ENCODE measurements at regions of chr7 and their contacts with region 1.

Region 1: DNA sequence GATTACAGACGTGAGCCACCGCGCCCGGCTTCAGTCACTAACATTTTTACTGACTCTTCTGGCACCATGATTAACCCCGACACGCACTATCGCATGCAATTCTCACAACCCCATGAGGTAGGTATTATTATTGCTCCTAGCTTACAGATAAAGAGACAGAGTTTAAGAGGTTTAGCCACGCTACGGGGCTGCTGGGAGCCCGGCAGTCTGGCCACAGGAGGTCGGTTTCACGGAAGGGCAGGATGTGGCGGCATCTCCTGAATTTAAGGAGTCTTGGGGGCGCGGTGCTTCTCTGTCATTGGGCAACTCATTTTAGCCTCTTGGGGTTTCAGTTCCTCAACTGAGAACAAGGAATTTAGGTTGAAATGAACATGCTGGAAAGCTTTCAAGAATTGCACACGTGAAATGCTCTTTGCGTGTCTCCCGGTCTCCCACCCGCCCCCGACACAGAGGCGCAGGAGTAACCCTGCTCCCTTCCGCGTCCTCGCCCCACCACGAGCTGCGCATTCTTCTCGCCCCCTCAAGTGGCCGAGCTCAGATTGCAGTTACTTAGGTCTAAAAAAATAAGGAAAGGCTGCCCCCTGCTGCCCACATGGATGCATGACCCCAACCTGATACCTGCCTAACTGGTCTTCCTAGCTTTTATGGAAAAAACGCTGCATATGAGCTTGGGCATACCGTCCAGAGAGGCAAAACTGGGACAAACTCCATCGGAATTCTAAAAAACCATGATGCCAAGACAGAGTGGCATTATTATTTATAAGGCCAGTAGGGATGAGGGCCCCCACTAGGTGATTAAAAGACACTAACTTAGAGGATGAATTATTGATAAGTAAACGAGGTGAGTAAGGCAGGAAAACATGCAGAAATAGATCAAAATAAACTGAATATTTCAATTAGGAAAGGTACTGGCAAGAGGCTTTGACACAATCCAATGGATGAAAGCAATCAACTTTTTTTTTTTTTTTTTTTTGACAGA is 12.4 kb downstream of the PRSS2 start:
- DNase-seq: peak; percentile 88
- H3K4me3 Mint-ChIP-seq: peak overlapping the region; percentile 64
- H3K27ac Mint-ChIP-seq: no peak overlapping the region
- H3K4me1 Mint-ChIP-seq: no peaks in the 10 kb centered on the region
- H3K27me3 Mint-ChIP-seq: peaks cover 6% of the 10 kb centered on the region
- CTCF ChIP-seq: peak; percentile 94

Region 2: GRCh38 chr7:142523821-142524460 is 259.3 kb before region 1 on chr7:
- CTCF ChIA-PET with region 1: interaction called, 15 read pairs
- POLR2A ChIA-PET with region 1: no interaction called
- intact Hi-C with region 1: no loop called
- DNase-seq: no peak
- H3K4me3 Mint-ChIP-seq: no peak overlapping the region
- H3K27ac Mint-ChIP-seq: no peak overlapping the region
- H3K4me1 Mint-ChIP-seq: no peaks in the 10 kb centered on the region
- H3K27me3 Mint-ChIP-seq: peaks cover 36% of the 10 kb centered on the region
- CTCF ChIP-seq: no peak

Region 3: GRCh38 chr7:142603870-142604448 is 179.3 kb before region 1 on chr7:
- CTCF ChIA-PET with region 1: interaction called, 47 read pairs
- POLR2A ChIA-PET with region 1: interaction called, 3 read pairs
- intact Hi-C with region 1: loop called (anchors 1 kb)
- DNase-seq: peak; percentile 71
- H3K4me3 Mint-ChIP-seq: peak overlapping the region; percentile 8
- H3K27ac Mint-ChIP-seq: no peak overlapping the region
- H3K4me1 Mint-ChIP-seq: peaks cover 14% of the 10 kb centered on the region
- H3K27me3 Mint-ChIP-seq: no peaks in the 10 kb centered on the region
- CTCF ChIP-seq: peak; percentile 83

Region 4: GRCh38 chr7:142669074-142669654 is 114.0 kb before region 1 on chr7:
- CTCF ChIA-PET with region 1: interaction called, 15 read pairs
- POLR2A ChIA-PET with region 1: no interaction called
- intact Hi-C with region 1: loop called (anchors 1 kb)
- DNase-seq: peak; percentile 22
- H3K4me3 Mint-ChIP-seq: no peak overlapping the region
- H3K27ac Mint-ChIP-seq: no peak overlapping the region
- H3K4me1 Mint-ChIP-seq: no peaks in the 10 kb centered on the region
- H3K27me3 Mint-ChIP-seq: peaks cover 50% of the 10 kb centered on the region
- CTCF ChIP-seq: peak; percentile 32

Region 5: GRCh38 chr7:142749218-142749993 is 33.8 kb before region 1 on chr7 and contains the start of gene PRSS1:
- CTCF ChIA-PET with region 1: interaction called, 10 read pairs
- POLR2A ChIA-PET with region 1: no interaction called
- intact Hi-C with region 1: no loop called
- DNase-seq: no peak
- H3K4me3 Mint-ChIP-seq: no peak within 1 kb of the TSS
- H3K27ac Mint-ChIP-seq: no peak within 1 kb of the TSS
- H3K4me1 Mint-ChIP-seq: peaks cover 6% of the 10 kb centered on the region
- H3K27me3 Mint-ChIP-seq: peaks cover 59% of the 10 kb centered on the region
- CTCF ChIP-seq: no peak
- total RNA-seq, gene PRSS1: not detected in 2 replicates

Region 6: GRCh38 chr7:142930126-142930730 is 147.0 kb after region 1 on chr7:
- CTCF ChIA-PET with region 1: no interaction called
- POLR2A ChIA-PET with region 1: no interaction called
- intact Hi-C with region 1: no loop called
- DNase-seq: no peak
- H3K4me3 Mint-ChIP-seq: no peak overlapping the region
- H3K27ac Mint-ChIP-seq: no peak overlapping the region
- H3K4me1 Mint-ChIP-seq: no peaks in the 10 kb centered on the region
- H3K27me3 Mint-ChIP-seq: peaks cover 33% of the 10 kb centered on the region
- CTCF ChIP-seq: no peak

Region 7: GRCh38 chr7:143042159-143042789 is 259.1 kb after region 1 on chr7:
- CTCF ChIA-PET with region 1: no interaction called
- POLR2A ChIA-PET with region 1: no interaction called
- intact Hi-C with region 1: no loop called
- DNase-seq: no peak
- H3K4me3 Mint-ChIP-seq: no peak overlapping the region
- H3K27ac Mint-ChIP-seq: no peak overlapping the region
- H3K4me1 Mint-ChIP-seq: no peaks in the 10 kb centered on the region
- H3K27me3 Mint-ChIP-seq: peaks cover 15% of the 10 kb centered on the region
- CTCF ChIP-seq: no peak

Measured in MCF 10A (cell line).